Transverse colon (tissue), 4 donors: ENCODE measurements at regions of chr1 and their contacts with region 1.

Region 1: GRCh38 chr1:55813618-55814017 is 598.5 kb upstream of the USP24 start:
- DNase-seq: peak; percentile 56
- H3K4me3 ChIP-seq: no peak overlapping the region
- H3K27ac ChIP-seq: peak overlapping the region in 3 of 4 donors; percentile 32 to 51 (median 50)
- H3K4me1 ChIP-seq: peaks cover 0 to 3% (median 0%) of the 10 kb centered on the region in 4 donors
- H3K27me3 ChIP-seq: no peaks in the 10 kb centered on the region
- CTCF ChIP-seq: no peak
- EP300 ChIP-seq: peak; percentile 68
- POLR2A ChIP-seq: no peak

Region 2: DNA sequence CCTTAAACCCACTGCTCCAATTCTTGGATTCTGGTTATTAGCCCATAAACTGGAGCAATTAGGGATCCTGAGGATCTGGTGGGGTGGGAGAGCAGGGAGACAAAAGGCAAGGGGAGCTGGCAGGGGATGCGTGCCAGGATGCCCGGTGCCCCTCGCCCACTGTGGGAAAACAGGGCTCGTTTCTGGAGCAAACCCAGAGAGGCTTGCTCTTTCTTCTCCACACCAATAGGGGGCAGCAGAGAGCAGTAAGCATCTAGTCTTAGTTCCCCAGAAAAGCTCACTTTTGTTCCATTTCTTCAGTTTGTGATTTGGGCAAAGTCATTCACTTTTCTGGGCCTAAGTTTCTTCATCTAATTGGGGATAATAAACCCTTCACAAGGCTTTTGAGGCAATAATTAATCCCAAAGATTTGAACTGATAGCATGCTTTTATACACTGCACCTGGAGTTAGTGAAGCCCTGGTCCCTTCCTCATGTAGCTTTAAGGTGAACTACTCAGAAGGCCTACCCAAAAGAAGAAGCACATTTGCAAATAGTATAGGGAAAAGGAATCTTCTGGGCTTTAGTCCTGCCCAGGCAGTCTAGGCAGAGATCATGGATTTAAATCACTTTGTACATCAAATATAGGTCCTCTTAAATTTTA is 437.9 kb before region 1 on chr1:
- in situ Hi-C with region 1: no loop called
- intact Hi-C with region 1: loop called (anchors 5 kb)
- DNase-seq: peak; percentile 30
- H3K4me3 ChIP-seq: no peak overlapping the region
- H3K27ac ChIP-seq: peak overlapping the region in 2 of 4 donors; percentile 5 to 36
- H3K4me1 ChIP-seq: no peaks in the 10 kb centered on the region
- H3K27me3 ChIP-seq: no peaks in the 10 kb centered on the region
- CTCF ChIP-seq: peak; percentile 84 to 93 (median 92)
- EP300 ChIP-seq: no peak
- POLR2A ChIP-seq: no peak

Region 3: GRCh38 chr1:55650444-55650843 is 163.2 kb before region 1 on chr1:
- in situ Hi-C with region 1: no loop called
- intact Hi-C with region 1: no loop called
- DNase-seq: no peak
- H3K4me3 ChIP-seq: no peak overlapping the region
- H3K27ac ChIP-seq: no peak overlapping the region
- H3K4me1 ChIP-seq: no peaks in the 10 kb centered on the region
- H3K27me3 ChIP-seq: no peaks in the 10 kb centered on the region
- CTCF ChIP-seq: no peak
- EP300 ChIP-seq: no peak
- POLR2A ChIP-seq: no peak